Heart right ventricle (tissue), 16 donors: ENCODE measurements at regions of chr14 and their contacts with region 1.

Region 1: DNA sequence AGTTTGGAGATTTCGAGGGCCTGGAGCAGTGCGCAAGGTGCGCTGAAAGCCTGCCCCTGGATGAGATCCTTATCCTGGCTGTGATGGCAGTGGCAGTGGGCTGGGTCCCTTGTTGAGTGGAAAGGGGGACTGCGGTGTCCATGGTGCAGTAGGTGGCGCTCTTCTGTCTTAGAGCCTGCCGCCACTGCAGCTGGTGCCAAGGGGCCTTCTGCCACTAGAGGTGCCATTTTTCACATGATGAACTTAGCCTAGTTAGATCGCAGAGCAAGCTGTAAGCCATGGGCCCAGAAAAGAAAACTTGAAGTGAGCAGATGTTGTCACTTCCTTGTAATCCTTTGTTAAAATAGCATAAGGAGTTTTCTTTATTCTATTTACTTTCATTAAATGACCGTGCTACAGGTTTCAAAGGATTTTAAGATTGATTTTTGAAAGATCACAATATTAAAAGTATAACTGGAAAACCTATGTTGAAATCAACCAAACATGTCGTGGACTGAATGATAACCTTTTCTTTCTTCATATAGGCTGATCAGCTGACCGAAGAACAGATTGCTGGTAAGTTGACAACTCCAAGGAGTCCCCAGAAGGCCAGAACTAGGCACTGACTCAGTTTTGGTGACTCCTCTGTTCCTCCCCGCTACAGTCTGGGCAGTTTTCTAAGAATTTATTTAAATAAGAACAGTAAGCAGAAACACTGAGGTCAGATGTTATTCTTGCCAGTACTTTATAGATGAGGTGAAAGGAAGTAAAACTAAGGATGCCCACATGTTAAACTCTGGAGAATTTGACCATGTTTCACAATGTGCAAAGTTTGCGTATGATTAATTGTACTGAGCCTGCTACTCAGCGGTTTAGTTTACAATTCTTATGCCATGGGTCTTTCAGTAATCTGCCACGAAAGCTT is 3.0 kb downstream of the CALM1 start:
- DNase-seq: peak; percentile 84 to 93
- ATAC-seq: peak; percentile 41 to 84 (median 72)
- H3K4me3 ChIP-seq: peak overlapping the region; percentile 78 to 100 (median 98)
- H3K27ac ChIP-seq: peak overlapping the region in 8 of 10 donors; percentile 87 to 96 (median 92)
- H3K4me1 ChIP-seq: peaks cover 15 to 63% (median 54%) of the 10 kb centered on the region in 9 donors
- H3K27me3 ChIP-seq: no peaks in the 10 kb centered on the region
- CTCF ChIP-seq: peak; percentile 96 to 100 (median 100)

Region 2: GRCh38 chr14:90301668-90302090 is 98.1 kb before region 1 on chr14:
- intact Hi-C with region 1: loop called in 3 of 10 experiments (anchors 2 to 10 kb)
- DNase-seq: no peak
- ATAC-seq: peak in 7 of 8 donors; percentile 37 to 84 (median 70)
- H3K4me3 ChIP-seq: no peak overlapping the region
- H3K27ac ChIP-seq: peak overlapping the region in 9 of 10 donors; percentile 4 to 74 (median 56)
- H3K4me1 ChIP-seq: peaks cover 5 to 45% (median 22%) of the 10 kb centered on the region in 9 donors
- H3K27me3 ChIP-seq: no peaks in the 10 kb centered on the region
- CTCF ChIP-seq: peak; percentile 20 to 75 (median 58)

Region 3: DNA sequence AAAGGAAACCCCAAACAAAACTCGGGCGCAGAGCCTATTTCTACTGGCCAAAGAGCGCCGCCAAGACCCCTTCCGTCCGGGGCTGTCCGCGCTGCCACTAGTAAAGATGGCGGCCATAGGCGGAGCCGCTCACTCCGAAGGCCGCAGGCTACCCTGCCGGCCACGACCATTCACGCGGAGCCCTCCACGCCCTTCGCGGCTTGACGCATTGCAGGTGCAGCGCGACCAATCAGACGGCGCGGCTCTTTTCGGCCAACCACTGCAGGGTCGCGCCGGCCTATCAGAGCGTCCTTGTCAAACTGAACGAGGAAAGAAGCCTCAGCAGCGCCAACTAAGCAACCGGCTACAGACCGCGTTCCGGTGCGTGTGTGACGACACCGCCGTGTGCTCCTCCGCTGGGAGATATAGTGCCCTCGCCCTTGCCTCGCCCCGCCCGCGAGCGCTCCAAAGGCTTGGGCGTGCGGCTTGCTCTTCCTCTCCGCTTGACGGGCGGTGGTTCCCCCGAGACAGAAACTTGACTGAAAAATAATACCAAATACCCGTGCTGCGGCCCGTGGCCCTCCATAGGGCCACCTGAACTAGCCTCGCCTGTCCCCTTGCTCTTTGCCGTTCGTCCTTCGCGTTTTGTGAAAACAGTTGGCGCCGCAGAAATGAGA is 16.6 kb before region 1 on chr14:
- intact Hi-C with region 1: loop called in 5 of 10 experiments (anchors 1 to 2 kb)
- DNase-seq: peak; percentile 99 to 100
- ATAC-seq: peak; percentile 93 to 97 (median 97)
- H3K4me3 ChIP-seq: peak overlapping the region; percentile 44 to 75 (median 66)
- H3K27ac ChIP-seq: peak overlapping the region; percentile 95 to 100 (median 99)
- H3K4me1 ChIP-seq: peaks cover 6 to 49% (median 34%) of the 10 kb centered on the region in 9 donors
- H3K27me3 ChIP-seq: no peaks in the 10 kb centered on the region
- CTCF ChIP-seq: peak in 5 of 9 donors; percentile 8 to 33 (median 22)

Region 4: DNA sequence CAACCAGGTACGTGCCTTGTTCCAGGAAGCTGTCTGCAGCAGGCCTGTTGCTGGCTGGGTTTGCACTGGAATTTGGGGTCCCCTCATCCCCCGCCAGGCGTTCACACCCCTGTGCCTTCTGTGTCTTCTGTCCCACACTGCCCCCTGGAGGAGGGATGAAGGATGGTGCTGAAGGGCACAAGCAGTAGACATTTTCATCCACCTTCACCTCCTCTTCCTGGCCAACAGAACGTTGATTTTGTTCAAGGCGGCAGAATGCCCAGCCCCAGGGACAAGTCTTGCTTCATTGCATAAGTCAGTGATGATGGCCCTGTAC is 119.1 kb after region 1 on chr14:
- intact Hi-C with region 1: loop called in 6 of 10 experiments (anchors 2 to 10 kb)
- DNase-seq: no peak
- ATAC-seq: peak in 1 of 8 donors; percentile 34
- H3K4me3 ChIP-seq: no peak overlapping the region
- H3K27ac ChIP-seq: peak overlapping the region in 1 of 10 donors; percentile 1
- H3K4me1 ChIP-seq: peaks cover 25 to 67% (median 59%) of the 10 kb centered on the region in 9 donors
- H3K27me3 ChIP-seq: no peaks in the 10 kb centered on the region
- CTCF ChIP-seq: peak; percentile 9 to 68 (median 51)

Region 5: GRCh38 chr14:90574188-90575131 is 174.7 kb after region 1 on chr14:
- intact Hi-C with region 1: no loop called
- DNase-seq: peak; percentile 45 to 71
- ATAC-seq: peak; percentile 67 to 80 (median 74)
- H3K4me3 ChIP-seq: no peak overlapping the region
- H3K27ac ChIP-seq: peak overlapping the region in 8 of 10 donors; percentile 4 to 76 (median 56)
- H3K4me1 ChIP-seq: peaks cover 7 to 50% (median 37%) of the 10 kb centered on the region in 9 donors
- H3K27me3 ChIP-seq: no peaks in the 10 kb centered on the region
- CTCF ChIP-seq: no peak

Region 6: DNA sequence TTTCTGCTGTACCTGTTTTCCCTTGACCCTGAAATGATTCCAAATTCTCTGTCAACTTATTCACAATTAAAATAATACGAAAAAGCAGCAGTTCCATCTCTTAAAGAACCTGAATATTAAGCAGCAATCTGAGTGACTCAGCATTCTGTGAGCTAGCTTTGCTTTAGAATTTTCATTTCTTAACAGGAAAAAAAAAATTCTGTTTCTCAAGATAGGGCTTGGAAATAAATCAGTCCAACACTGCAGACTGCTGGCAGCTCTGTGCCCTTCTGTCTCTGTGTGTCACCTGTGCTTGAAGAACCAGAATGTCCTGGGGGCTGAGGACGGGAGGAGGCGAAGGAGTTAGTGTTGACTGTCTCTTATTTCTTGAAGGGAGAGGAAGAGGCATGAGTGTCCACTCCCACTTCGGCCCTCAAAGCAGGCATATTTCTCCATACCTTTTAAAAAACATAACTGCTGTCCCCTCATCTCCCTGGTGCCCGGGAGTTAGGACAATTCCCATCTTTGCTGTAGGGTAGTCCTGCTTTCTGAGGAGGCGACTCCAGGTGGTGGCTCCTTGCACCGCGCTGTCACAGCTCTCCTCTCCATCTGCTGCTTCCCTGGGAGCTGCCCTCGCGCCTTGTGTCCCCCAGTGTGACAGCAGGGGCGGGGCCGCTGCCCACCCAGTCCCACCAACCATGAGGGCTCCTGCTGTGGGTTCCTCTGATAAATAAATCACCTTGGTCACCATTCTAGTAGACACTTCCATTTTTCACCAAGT is 200.1 kb after region 1 on chr14:
- intact Hi-C with region 1: loop called in 1 of 10 experiments (anchors 10 kb)
- DNase-seq: no peak
- ATAC-seq: peak in 5 of 8 donors; percentile 45 to 62 (median 50)
- H3K4me3 ChIP-seq: no peak overlapping the region
- H3K27ac ChIP-seq: no peak overlapping the region
- H3K4me1 ChIP-seq: peaks cover 0 to 15% (median 5%) of the 10 kb centered on the region in 9 donors
- H3K27me3 ChIP-seq: no peaks in the 10 kb centered on the region
- CTCF ChIP-seq: peak in 5 of 9 donors; percentile 17 to 49 (median 36)

Region 7: DNA sequence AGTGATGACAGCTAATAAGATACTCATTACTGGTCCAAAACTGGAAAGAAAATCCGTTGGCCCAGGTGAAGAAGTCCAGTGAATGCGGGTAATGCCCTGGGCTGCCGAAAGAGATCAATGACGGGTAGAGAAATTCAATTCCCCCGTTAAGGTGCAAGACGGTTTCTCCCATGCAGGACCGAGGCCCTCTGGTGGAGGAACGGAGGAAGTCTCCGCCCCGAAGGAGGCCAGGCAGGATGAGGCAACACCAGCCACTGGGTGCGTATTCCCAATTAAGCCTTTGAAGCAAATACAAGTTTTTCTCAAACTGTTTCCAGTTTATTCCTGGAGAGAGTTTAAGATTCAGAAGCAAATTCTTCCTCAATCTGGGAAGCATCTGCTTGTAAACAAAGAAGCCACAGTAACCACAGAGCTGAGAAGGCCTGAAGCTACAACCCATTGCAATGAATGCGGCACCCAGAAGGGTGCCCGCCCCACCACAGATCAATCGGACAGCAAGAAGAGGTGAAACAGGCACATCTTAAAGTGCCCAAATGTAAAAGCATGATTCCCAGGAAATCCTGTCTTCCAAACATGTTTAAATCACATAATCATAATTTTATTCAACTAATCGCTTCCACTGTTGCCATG is 297.9 kb after region 1 on chr14:
- intact Hi-C with region 1: loop called in 9 of 10 experiments (anchors 1 to 5 kb)
- DNase-seq: peak; percentile 82 to 89
- ATAC-seq: peak; percentile 81 to 97 (median 92)
- H3K4me3 ChIP-seq: peak overlapping the region in 2 of 10 donors; percentile 7 to 35
- H3K27ac ChIP-seq: peak overlapping the region; percentile 33 to 88 (median 73)
- H3K4me1 ChIP-seq: peaks cover 13 to 47% (median 40%) of the 10 kb centered on the region in 9 donors
- H3K27me3 ChIP-seq: no peaks in the 10 kb centered on the region
- CTCF ChIP-seq: peak; percentile 93 to 98 (median 97)